ENCODE measurements at regions of chr3 and their contacts with region 1.

Region 1: DNA sequence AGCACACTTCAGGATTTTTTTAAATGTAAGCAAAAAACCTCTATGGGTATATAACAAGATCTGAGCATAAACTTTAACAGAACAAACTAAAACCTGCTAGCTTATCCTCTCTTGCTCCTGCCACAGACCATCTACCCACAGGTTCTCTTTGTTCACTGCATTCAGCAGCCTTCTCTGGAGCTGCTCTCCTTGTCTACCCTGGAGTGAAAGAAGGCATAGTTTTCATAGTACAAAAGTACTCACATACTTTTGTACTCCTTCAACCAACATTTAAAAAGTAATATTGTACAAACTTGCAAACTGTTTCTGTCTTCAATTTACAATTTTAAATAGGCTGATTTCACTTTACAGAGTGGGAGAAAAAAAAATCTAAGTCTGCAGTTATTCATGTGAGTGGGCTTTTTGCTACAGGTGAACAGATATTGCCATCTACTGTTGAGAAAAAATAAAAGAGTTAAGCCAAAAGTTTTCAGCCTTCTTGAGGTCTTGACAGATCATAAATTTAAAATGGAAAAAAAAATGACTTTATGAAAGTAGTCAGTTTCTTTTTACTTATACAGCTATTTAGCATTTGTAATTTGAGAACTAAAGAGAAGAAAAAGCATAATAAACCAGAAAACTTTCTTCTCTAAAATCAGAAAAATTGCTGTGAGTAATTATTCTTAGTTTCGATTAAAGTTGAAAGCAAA is 20.4 kb downstream of the TERC start:
- DNase-seq: no peak
- H3K4me3 ChIP-seq: no peak overlapping the region
- H3K27ac ChIP-seq: no peak overlapping the region
- H3K4me1 ChIP-seq: peaks cover 0 to 6% (median 3%) of the 10 kb centered on the region in 4 donors
- H3K27me3 ChIP-seq: peaks cover 0 to 9% (median 0%) of the 10 kb centered on the region in 4 donors
- CTCF ChIP-seq: peak; percentile 47 to 60 (median 56)
- EP300 ChIP-seq: no peak
- POLR2A ChIP-seq: no peak

Region 2: DNA sequence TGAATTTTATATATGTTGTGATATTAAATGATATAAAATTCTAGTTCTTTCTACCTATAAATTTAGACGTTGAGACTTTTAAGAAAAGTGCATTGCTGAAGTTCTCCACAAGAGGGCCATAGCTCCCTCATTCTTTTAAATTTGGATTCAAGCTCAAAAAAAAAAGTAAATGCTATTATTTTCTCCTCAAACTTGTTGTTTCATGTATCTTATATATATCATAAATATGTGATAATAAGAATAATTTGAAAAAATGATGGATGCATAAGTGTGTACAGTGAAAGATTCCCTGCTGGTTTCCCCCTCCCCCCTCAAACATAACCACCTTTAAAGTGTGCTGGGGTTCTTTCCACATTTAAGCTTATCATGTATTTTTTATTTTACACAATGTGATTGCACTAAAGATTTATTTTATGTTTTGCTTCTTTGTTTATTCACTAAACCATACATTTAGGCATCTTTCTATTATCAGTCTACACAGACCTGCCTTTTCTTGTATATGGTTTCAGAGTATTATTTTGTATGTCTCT is 879.4 kb before region 1 on chr3:
- intact Hi-C with region 1: loop called (anchors 10 kb)
- DNase-seq: no peak
- H3K4me3 ChIP-seq: no peak overlapping the region
- H3K27ac ChIP-seq: no peak overlapping the region
- H3K4me1 ChIP-seq: peaks cover 0 to 5% (median 1%) of the 10 kb centered on the region in 4 donors
- H3K27me3 ChIP-seq: no peaks in the 10 kb centered on the region
- CTCF ChIP-seq: peak; percentile 46 to 79 (median 74)
- EP300 ChIP-seq: no peak
- POLR2A ChIP-seq: no peak

Region 3: DNA sequence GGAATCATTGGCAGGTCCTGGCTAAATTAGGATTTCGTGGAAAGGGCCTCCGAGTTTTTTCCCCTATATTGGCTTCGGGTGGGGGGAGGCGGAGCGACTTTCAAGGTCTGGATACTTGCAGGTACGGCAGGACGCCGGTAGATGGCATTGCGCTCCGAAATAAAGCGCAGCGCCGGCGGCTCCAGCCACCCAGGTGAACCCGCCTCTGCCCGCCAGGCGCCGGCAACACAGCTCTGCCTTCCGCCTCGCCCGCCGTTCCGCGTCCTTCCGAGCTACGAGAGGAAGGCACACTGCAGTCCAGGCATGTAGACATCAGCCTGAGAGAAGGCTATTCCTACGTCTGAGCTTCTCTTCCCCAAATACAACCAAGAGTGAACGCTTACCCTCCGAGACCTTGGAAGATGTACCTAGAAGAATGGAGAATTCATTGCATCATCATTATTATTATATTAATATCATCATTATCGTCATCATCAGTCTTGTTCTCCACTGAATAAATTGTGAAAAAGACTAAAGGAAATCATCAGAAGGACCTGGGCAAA is 595.1 kb before region 1 on chr3:
- intact Hi-C with region 1: loop called (anchors 5 kb)
- DNase-seq: no peak
- H3K4me3 ChIP-seq: peak overlapping the region; percentile 17 to 49 (median 30)
- H3K27ac ChIP-seq: peak overlapping the region; percentile 47 to 58 (median 52)
- H3K4me1 ChIP-seq: peaks cover 5 to 36% (median 32%) of the 10 kb centered on the region in 4 donors
- H3K27me3 ChIP-seq: peaks cover 0 to 58% (median 23%) of the 10 kb centered on the region in 4 donors
- CTCF ChIP-seq: peak; percentile 86 to 91 (median 88)
- EP300 ChIP-seq: no peak
- POLR2A ChIP-seq: no peak

Region 4: DNA sequence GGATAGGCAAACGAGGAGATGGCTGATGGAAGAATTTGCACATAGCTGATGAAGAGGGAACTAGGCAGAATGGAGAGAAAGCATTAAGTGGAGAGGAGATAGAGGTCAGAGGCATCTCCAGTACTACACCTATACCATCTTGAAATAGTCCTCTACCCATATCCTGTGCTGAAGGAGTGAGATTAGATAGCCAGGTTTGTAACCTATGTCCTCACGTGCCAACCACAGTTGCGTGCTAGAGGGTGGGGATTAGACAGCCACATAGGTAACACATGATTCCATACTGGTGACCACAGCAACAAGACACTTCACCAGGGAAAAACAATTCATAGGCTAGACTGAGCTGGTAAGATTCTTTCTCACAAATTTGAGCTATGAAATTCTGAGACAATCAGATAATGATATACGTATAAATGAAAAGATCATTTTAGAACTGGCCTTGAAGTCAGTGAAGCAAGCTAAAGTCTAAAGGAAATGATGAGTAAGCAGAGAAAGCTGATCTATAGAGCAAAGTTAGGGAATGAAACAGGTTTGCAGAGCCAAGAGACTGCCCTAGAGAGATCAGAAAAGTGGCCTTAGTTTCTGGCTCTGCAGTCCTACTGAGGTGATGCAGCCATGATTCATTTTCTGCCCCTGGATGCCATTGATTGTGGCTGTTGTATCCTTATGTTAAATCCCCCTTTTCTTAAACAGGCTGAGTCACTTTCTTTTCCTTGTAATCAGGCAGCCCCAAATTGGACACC is 46.3 kb after region 1 on chr3:
- intact Hi-C with region 1: no loop called
- DNase-seq: no peak
- H3K4me3 ChIP-seq: no peak overlapping the region
- H3K27ac ChIP-seq: no peak overlapping the region
- H3K4me1 ChIP-seq: no peaks in the 10 kb centered on the region
- H3K27me3 ChIP-seq: no peaks in the 10 kb centered on the region
- CTCF ChIP-seq: no peak
- EP300 ChIP-seq: no peak
- POLR2A ChIP-seq: no peak

Measured in esophagus muscularis mucosa (tissue), 4 donors.